ENCODE measurements at regions of chr3 and their contacts with region 1.

Region 1: DNA sequence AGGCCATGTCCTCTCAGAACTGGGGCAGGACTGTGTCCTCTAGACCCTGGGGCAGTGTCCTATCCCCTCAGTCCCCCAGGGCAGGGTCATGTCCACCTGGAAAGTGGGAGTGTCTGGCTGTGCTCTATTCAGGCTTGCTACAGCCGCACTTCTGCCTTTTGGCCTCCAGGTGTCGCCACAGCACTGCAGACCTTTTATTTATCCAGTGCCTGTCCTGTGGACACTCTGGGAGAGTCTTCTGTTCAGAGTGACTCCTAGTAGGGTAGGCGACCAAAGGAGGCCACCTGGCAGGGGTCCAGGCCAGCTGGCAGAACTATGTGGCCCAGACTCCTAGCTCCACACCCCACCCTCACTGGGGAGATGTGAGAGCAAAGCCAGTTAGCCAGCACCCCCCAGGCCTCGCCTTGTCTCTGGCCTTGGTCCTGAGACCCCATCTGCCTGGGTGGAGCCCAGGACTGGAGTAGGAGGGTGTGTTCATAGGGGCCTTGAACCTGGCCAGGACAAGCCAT is 3.9 kb downstream of the TMIE start:
- DNase-seq: peak; percentile 90
- H3K4me3 Mint-ChIP-seq: no peak overlapping the region
- H3K27ac Mint-ChIP-seq: no peak overlapping the region
- H3K4me1 Mint-ChIP-seq: peaks cover 1% of the 10 kb centered on the region
- H3K27me3 Mint-ChIP-seq: peaks cover 28% of the 10 kb centered on the region

Region 2: GRCh38 chr3:46895204-46895660 is 190.2 kb after region 1 on chr3:
- intact Hi-C with region 1: loop called (anchors 1 kb)
- DNase-seq: peak; percentile 93
- H3K4me3 Mint-ChIP-seq: no peak overlapping the region
- H3K27ac Mint-ChIP-seq: no peak overlapping the region
- H3K4me1 Mint-ChIP-seq: peaks cover 5% of the 10 kb centered on the region
- H3K27me3 Mint-ChIP-seq: peaks cover 64% of the 10 kb centered on the region

Region 3: GRCh38 chr3:46909535-46910442 is 204.7 kb after region 1 on chr3:
- intact Hi-C with region 1: loop called (anchors 1 kb)
- DNase-seq: peak; percentile 91
- H3K4me3 Mint-ChIP-seq: no peak overlapping the region
- H3K27ac Mint-ChIP-seq: no peak overlapping the region
- H3K4me1 Mint-ChIP-seq: peaks cover 14% of the 10 kb centered on the region
- H3K27me3 Mint-ChIP-seq: no peaks in the 10 kb centered on the region